K562 (cell line): ENCODE measurements at regions of chr17 and their contacts with region 1.

Region 1: GRCh38 chr17:75182569-75183450 is at the start of gene SUMO2:
- DNase-seq: peak; percentile 98 to 99 (median 99)
- ATAC-seq: peak; percentile 92
- H3K4me3 ChIP-seq: peak within 1 kb of the TSS; percentile 100
- H3K27ac ChIP-seq: peak within 1 kb of the TSS; percentile 100
- H3K4me1 ChIP-seq: peaks cover 18 to 26% of the 10 kb centered on the region in 2 experiments; a peak in 4 of 5 replicates
- H3K27me3 ChIP-seq: no peaks in the 10 kb centered on the region
- CTCF ChIP-seq: peak; percentile 34 to 38 (median 35); a peak in 2 of 6 replicates
- EP300 ChIP-seq: no peak
- POLR2A ChIP-seq: peak; percentile 82
- RAD21 ChIP-seq: no peak; a peak in 1 of 4 replicates
- polyA plus RNA-seq, gene SUMO2: 570 to 733 TPM

Region 2: DNA sequence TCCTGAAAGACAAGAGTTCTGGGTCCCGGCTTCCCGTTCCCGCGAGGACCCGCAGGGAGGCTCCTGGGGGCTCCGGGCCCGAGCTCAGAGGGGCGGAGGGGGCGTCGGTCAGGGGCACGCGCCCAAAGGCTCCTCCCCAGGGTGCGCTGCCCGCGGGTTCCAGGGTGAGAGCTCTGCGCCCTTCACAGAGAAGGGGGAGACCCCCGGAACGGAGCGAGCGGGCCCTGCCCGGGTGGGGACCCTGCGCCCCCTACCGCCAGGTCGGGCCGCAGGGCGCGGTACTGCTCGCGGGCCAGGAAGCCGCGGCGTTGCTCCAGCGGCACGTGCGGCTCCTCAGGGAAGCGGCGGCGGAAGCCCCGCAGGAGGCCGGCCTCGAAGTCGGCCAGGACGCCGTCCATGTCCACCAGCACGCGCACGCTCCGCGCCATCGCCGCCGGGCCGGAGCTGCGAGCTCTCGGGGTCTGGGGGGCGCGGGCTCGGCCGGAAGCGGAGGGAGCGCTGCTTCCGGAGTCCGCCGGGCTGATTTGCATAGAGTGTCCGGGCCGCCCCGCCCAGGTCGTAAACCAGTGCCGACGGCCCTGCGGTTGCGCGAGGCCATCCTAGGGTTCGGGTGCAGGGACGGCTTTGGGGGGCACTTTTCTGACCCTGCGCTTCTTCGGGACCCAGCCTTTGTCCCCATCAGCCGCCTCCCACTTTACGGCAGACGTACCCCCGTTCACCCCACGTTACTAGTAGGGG is 51.4 kb before region 1 on chr17 and contains the start of gene NT5C:
- CTCF ChIA-PET with region 1: no interaction called
- POLR2A ChIA-PET with region 1: no interaction called
- in situ Hi-C with region 1: no loop called
- intact Hi-C with region 1: loop called (anchors 5 kb)
- DNase-seq: peak; percentile 86 to 92 (median 88)
- ATAC-seq: peak; percentile 90
- H3K4me3 ChIP-seq: peak within 1 kb of the TSS; percentile 90
- H3K27ac ChIP-seq: peak within 1 kb of the TSS; percentile 90
- H3K4me1 ChIP-seq: peaks cover 12 to 36% of the 10 kb centered on the region in 2 experiments; a peak in 4 of 5 replicates
- H3K27me3 ChIP-seq: no peaks in the 10 kb centered on the region
- CTCF ChIP-seq: peak; percentile 75 to 86 (median 77)
- EP300 ChIP-seq: no peak
- POLR2A ChIP-seq: peak; percentile 83
- RAD21 ChIP-seq: peak; percentile 70 to 72
- polyA plus RNA-seq, gene NT5C: 2.9 to 5.0 TPM

Region 3: DNA sequence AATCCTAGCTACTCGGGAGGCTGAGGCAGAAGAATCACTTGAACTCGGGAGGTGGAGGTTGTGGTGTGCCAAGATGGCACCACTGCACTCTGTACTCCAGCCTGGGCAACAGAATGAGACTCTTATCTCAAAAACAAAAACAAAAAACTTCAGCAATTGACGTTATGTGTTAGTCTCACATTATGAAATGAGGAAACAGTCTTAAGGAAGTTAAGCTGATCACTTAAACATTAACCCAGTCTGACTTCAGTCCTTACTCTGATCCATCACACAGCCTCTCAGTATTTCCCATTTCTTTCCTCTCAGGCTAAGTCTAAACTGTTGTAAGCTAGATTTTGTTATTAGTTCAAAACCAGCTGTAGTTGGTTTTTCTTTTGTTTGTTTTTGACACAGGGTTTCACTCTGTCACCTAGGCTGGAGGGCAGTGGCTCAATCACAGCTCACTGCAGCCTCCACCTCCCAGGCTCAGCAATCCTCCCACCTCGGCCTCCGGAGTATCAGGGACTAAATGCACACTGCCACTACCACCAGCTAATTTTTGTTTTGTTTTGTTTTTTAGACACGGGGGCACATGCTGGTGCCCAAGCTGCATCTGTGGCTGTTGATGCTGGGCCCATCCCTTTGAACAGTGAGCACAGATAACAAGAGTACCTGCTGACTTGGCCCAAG is 34.8 kb before region 1 on chr17:
- CTCF ChIA-PET with region 1: no interaction called
- POLR2A ChIA-PET with region 1: interaction called, 15 read pairs
- in situ Hi-C with region 1: no loop called
- intact Hi-C with region 1: no loop called
- DNase-seq: no peak
- ATAC-seq: no peak
- H3K4me3 ChIP-seq: no peak overlapping the region
- H3K27ac ChIP-seq: no peak overlapping the region
- H3K4me1 ChIP-seq: peaks cover 5 to 12% of the 10 kb centered on the region in 2 experiments; a peak in 4 of 5 replicates
- H3K27me3 ChIP-seq: no peaks in the 10 kb centered on the region
- CTCF ChIP-seq: no peak
- EP300 ChIP-seq: no peak
- POLR2A ChIP-seq: no peak
- RAD21 ChIP-seq: no peak

Region 4: GRCh38 chr17:75393523-75394331 is 210.9 kb after region 1 on chr17:
- CTCF ChIA-PET with region 1: no interaction called
- POLR2A ChIA-PET with region 1: no interaction called
- in situ Hi-C with region 1: no loop called
- intact Hi-C with region 1: no loop called
- DNase-seq: peak; percentile 97 to 98 (median 98)
- ATAC-seq: peak; percentile 98
- H3K4me3 ChIP-seq: peak overlapping the region; percentile 66
- H3K27ac ChIP-seq: peak overlapping the region; percentile 63
- H3K4me1 ChIP-seq: peaks cover 5 to 13% of the 10 kb centered on the region in 2 experiments; a peak in 4 of 5 replicates
- H3K27me3 ChIP-seq: no peaks in the 10 kb centered on the region
- CTCF ChIP-seq: 0 out of 6 replicates have a peak, but pooled peaks of 2 of the 3 experiments have one; percentile 2 to 15
- EP300 ChIP-seq: no peak
- POLR2A ChIP-seq: peak; percentile 61
- RAD21 ChIP-seq: no peak